Posterior cingulate gyrus (tissue), 11 donors: ENCODE measurements at regions of chr4 and their contacts with region 1.

Region 1: GRCh38 chr4:128809477-128810330 is at the start of gene JADE1:
- DNase-seq: peak; percentile 80 to 98 (median 86)

Region 2: GRCh38 chr4:128287871-128288688 is 521.6 kb before region 1 on chr4:
- intact Hi-C with region 1: loop called (anchors 5 kb)
- DNase-seq: peak; percentile 96 to 99 (median 98)

Region 3: DNA sequence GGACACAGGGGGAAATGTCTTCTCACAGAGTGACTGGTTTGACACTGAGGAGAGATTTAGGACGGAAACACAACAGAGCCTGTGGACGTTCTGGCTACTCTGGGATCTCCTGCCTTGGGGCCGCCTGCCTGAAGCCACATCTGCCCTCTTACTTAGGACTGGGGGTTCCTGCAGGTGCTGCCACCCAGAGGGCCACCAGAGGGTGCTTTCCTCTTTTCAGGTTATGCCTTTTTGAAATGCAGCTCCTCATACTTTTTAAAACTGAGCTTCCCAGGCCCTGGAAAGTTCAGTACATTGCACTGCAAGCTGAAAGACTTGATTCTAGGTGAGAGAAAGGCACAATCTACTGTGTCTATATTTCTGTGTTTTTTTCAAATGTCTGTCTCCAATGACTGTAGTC is 429.8 kb before region 1 on chr4:
- intact Hi-C with region 1: loop called (anchors 10 kb)
- DNase-seq: peak in 2 of 10 donors; percentile 12 to 83

Region 4: GRCh38 chr4:128454281-128455075 is 355.2 kb before region 1 on chr4:
- intact Hi-C with region 1: loop called (anchors 5 kb)
- DNase-seq: peak; percentile 48 to 95 (median 74)

Region 5: DNA sequence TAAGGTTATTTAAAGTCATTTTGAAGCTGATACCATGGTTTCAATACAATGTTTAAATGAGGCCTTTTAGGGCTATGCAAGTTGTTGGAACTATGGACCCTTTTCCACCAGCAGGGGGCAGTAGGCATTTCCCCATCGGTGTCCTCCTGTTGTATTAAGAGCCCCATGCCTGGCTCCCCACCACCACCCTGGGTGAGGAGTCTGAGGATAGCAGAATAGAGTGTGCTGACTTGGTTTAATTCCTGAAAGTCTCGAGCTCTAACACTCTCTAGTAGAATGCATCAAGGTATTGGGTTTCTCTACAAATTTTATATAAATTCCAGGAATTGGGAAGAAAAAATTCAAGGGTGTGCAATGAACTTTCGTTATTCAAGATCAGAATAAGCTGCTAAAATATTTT is 235.0 kb before region 1 on chr4:
- intact Hi-C with region 1: loop called (anchors 2 kb)
- DNase-seq: peak; percentile 58 to 96 (median 84)